CD8-positive, alpha-beta T cell (primary cell): ENCODE measurements at regions of chr16 and their contacts with region 1.

Region 1: GRCh38 chr16:27367461-27368357 is 34.3 kb upstream of the IL21R start:
- DNase-seq: peak; percentile 70 to 98 (median 84)
- ATAC-seq: peak; percentile 81
- H3K4me3 ChIP-seq: peak overlapping the region; percentile 1 to 11
- H3K4me3 Mint-ChIP-seq: peak overlapping the region; percentile 26
- H3K27ac ChIP-seq: peak overlapping the region; percentile 93 to 97
- H3K27ac Mint-ChIP-seq: peak overlapping the region; percentile 99
- H3K4me1 ChIP-seq: peaks cover 58% of the 10 kb centered on the region
- H3K4me1 Mint-ChIP-seq: peaks cover 69% of the 10 kb centered on the region
- H3K27me3 ChIP-seq: no peaks in the 10 kb centered on the region
- H3K27me3 Mint-ChIP-seq: no peaks in the 10 kb centered on the region
- CTCF ChIP-seq: peak; percentile 73

Region 2: DNA sequence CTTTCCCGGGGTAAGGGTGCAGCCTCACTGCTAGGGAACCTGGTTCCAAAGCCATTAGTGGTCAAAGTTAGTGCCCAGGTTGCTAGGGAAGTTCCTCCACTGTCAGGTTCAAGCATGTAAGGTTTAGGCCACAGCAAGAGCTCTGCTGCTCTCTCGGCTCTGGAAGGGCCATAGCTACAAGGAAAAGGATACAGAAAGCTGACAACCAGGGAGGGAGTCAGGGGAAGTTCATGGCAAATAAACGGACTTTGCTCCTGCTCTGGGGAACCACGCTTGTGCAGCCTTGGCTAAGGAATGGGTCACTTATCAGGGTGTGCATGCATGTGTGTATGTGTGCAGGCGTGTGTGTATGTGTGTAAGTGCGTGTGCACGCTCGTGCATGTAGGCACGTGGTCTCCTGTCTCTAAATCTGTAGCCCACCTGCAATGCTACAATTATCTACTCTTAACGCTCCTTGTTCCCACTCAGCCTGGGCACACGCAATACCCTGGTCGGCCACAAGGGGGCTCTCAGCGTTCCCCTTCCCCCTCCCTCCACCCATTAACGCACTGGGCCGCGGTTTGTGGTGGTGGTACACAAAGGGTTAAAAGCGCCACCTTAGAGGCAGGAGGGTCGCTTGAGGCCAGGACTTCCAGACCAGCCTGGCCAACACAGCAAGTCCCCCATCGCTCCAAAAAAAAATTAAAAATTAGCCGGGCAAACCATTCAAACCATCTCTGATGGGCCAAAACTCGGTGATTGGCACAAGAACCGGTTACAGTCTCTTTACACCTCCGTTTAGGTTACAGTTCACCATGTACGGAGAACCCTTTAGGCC is 212.8 kb before region 1 on chr16:
- CTCF ChIA-PET with region 1: interaction called, 10 read pairs
- POLR2A ChIA-PET with region 1: no interaction called
- intact Hi-C with region 1: loop called (anchors 1 kb)
- DNase-seq: peak; percentile 39 to 83 (median 71)
- ATAC-seq: peak; percentile 94
- H3K4me3 ChIP-seq: no peak overlapping the region
- H3K4me3 Mint-ChIP-seq: no peak overlapping the region
- H3K27ac ChIP-seq: no peak overlapping the region
- H3K27ac Mint-ChIP-seq: no peak overlapping the region
- H3K4me1 ChIP-seq: peaks cover 9% of the 10 kb centered on the region
- H3K4me1 Mint-ChIP-seq: peaks cover 8% of the 10 kb centered on the region
- H3K27me3 ChIP-seq: no peaks in the 10 kb centered on the region
- H3K27me3 Mint-ChIP-seq: no peaks in the 10 kb centered on the region
- CTCF ChIP-seq: peak; percentile 99

Region 3: GRCh38 chr16:27203429-27204231 is 164.1 kb before region 1 on chr16 and contains the start of gene KDM8:
- CTCF ChIA-PET with region 1: interaction called, 22 read pairs
- POLR2A ChIA-PET with region 1: interaction called, 13 read pairs
- intact Hi-C with region 1: loop called in 1 of 2 experiments (anchors 1 kb)
- DNase-seq: peak; percentile 99 to 100 (median 100)
- ATAC-seq: peak; percentile 85
- H3K4me3 ChIP-seq: peak within 1 kb of the TSS; percentile 83 to 93
- H3K4me3 Mint-ChIP-seq: peak within 1 kb of the TSS; percentile 96
- H3K27ac ChIP-seq: peak within 1 kb of the TSS; percentile 83 to 97
- H3K27ac Mint-ChIP-seq: peak within 1 kb of the TSS; percentile 99
- H3K4me1 ChIP-seq: peaks cover 54% of the 10 kb centered on the region
- H3K4me1 Mint-ChIP-seq: peaks cover 61% of the 10 kb centered on the region
- H3K27me3 ChIP-seq: no peaks in the 10 kb centered on the region
- H3K27me3 Mint-ChIP-seq: no peaks in the 10 kb centered on the region
- CTCF ChIP-seq: no peak
- total RNA-seq, gene KDM8: 17.6 to 22.6 TPM

Region 4: DNA sequence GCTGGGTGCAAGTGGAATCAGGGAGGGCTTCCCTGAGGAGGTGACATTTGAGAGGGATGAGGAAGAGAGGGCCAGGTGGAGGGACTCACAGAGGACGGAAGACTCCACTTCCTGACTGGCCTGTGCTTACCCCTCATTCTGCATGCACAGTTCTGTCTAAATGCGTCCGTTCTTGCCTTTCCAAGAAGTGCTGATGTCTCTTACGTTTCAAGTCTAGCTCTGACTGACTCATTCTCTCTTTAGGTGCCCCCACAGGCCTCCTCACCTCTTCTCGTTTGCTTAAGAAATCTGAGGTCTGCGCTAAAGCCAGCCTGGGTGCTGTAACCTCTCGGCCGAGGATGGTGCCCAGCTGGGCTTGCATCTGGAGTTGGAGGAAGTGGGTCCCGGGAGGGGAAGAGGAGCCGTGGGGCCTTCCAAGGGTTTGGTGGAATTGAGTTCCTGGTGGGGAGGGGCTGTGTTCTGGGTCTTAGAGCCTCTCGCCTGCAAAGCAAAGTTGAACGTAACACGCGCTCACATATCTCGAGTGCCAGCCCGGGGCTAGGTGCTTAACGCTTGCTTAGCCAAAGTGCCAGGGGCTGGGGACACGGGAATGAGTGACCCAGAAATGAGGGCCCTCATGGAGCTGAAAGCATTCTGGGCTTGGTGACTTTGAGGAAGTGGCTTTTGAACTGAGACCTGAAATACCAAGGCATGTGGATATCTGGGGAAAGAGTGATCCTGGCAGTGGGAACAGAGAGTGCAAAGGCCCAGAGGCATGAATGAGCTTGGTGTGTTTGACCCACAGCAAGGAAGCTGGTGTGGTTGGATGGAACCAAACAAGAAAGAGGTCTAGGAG is 49.1 kb before region 1 on chr16:
- CTCF ChIA-PET with region 1: interaction called, 20 read pairs
- POLR2A ChIA-PET with region 1: interaction called, 5 read pairs
- intact Hi-C with region 1: loop called (anchors 2 kb)
- DNase-seq: peak; percentile 10 to 76 (median 61)
- ATAC-seq: peak; percentile 67
- H3K4me3 ChIP-seq: peak overlapping the region; percentile 12 to 25
- H3K4me3 Mint-ChIP-seq: peak overlapping the region; percentile 74
- H3K27ac ChIP-seq: peak overlapping the region; percentile 28 to 87
- H3K27ac Mint-ChIP-seq: peak overlapping the region; percentile 98
- H3K4me1 ChIP-seq: peaks cover 75% of the 10 kb centered on the region
- H3K4me1 Mint-ChIP-seq: peaks cover 73% of the 10 kb centered on the region
- H3K27me3 ChIP-seq: no peaks in the 10 kb centered on the region
- H3K27me3 Mint-ChIP-seq: no peaks in the 10 kb centered on the region
- CTCF ChIP-seq: no peak

Region 5: DNA sequence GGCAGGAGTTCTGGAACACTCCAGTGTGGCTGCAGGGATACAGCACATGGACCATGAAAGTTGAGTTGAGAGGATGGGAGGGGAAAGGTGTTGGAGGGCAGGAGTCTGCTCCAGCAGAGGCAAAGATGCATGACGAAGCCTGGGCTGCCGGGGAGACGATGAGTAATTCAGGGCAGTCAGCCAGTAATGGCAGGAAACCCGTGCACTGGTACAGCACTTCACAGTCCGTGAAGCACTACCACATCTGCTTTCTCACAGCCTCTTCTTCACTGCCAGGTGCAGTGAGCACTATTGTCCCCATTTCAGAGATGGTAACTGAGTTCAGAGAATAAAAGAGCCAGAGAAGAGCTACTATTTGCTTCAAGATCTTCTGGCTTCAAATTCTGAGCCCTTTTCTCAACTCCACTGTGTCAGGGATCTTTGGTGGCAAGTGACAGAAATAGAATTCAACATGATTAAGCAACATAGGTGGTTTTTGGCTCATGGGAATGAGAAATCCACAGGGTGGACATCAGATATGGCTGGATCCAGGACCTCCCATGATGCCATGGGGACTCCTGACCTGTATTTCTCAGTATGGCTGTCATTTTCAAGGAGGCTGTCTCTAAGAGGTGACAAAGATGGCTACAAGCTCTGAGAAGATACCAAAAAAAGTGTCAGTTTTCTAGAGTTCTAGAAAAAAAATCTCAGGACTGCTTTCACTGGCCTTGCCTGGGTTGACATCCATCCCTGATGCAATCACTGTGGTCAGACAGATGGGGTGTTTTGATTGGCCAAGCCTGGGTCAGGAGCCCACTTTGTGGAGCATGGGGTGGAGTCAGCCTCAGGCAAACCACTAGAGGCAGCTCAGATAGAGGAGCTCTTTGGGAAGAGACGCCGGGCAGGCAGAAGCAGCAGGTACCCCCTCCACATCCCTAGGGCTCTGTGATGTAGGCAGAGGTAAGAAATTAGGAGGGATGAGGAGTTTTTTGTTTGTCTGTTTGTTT is 59.0 kb after region 1 on chr16:
- CTCF ChIA-PET with region 1: interaction called, 5 read pairs
- POLR2A ChIA-PET with region 1: interaction called, 6 read pairs
- intact Hi-C with region 1: loop called in 1 of 2 experiments (anchors 1 kb)
- DNase-seq: peak in 8 of 9 experiments; percentile 67 to 89 (median 81)
- ATAC-seq: peak; percentile 87
- H3K4me3 ChIP-seq: no peak overlapping the region
- H3K4me3 Mint-ChIP-seq: no peak overlapping the region
- H3K27ac ChIP-seq: peak overlapping the region in 1 of 2 experiments; percentile 69
- H3K27ac Mint-ChIP-seq: peak overlapping the region; percentile 69
- H3K4me1 ChIP-seq: peaks cover 22% of the 10 kb centered on the region
- H3K4me1 Mint-ChIP-seq: peaks cover 57% of the 10 kb centered on the region
- H3K27me3 ChIP-seq: no peaks in the 10 kb centered on the region
- H3K27me3 Mint-ChIP-seq: no peaks in the 10 kb centered on the region
- CTCF ChIP-seq: no peak

Region 6: GRCh38 chr16:27461483-27462171 is 93.9 kb after region 1 on chr16:
- CTCF ChIA-PET with region 1: interaction called, 23 read pairs
- POLR2A ChIA-PET with region 1: interaction called, 26 read pairs
- intact Hi-C with region 1: loop called in 1 of 2 experiments (anchors 1 kb)
- DNase-seq: no peak
- ATAC-seq: no peak
- H3K4me3 ChIP-seq: no peak overlapping the region
- H3K4me3 Mint-ChIP-seq: peak overlapping the region; percentile 32
- H3K27ac ChIP-seq: no peak overlapping the region
- H3K27ac Mint-ChIP-seq: peak overlapping the region; percentile 69
- H3K4me1 ChIP-seq: peaks cover 76% of the 10 kb centered on the region
- H3K4me1 Mint-ChIP-seq: peaks cover 79% of the 10 kb centered on the region
- H3K27me3 ChIP-seq: no peaks in the 10 kb centered on the region
- H3K27me3 Mint-ChIP-seq: no peaks in the 10 kb centered on the region
- CTCF ChIP-seq: no peak

Region 7: DNA sequence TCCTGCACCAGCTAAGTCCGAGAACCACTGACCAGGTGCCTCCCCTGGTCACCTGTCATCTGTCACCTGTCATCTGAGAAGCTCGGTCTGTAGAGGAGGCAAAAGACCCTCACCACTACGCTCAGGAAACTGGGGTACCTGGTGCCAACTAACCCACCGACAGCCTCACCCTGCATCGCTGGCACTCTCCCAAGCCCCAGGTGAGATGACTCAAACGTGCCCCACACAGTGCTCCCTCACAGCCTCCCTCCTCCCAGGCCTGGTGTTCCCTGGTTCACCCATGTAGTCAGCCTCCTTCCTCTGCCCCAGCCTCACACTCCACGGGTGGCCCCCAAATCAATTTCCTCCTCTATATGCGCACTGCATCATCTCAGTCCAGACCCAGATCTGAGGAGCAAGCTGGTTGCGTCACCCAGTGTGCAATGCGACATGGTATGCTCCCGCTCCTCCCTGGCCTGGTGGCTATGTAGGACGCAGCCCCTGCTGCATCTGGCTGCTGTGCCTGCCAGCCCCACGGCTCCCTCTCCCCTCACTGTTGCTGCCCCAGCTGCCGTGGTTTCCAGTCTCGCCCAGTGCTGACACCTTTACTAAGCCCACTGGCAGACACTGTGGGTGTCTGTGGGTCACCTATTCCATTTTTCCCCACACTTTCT is 113.7 kb after region 1 on chr16:
- CTCF ChIA-PET with region 1: no interaction called
- POLR2A ChIA-PET with region 1: no interaction called
- intact Hi-C with region 1: no loop called
- DNase-seq: no peak
- ATAC-seq: no peak
- H3K4me3 ChIP-seq: no peak overlapping the region
- H3K4me3 Mint-ChIP-seq: no peak overlapping the region
- H3K27ac ChIP-seq: no peak overlapping the region
- H3K27ac Mint-ChIP-seq: no peak overlapping the region
- H3K4me1 ChIP-seq: no peaks in the 10 kb centered on the region
- H3K4me1 Mint-ChIP-seq: no peaks in the 10 kb centered on the region
- H3K27me3 ChIP-seq: no peaks in the 10 kb centered on the region
- H3K27me3 Mint-ChIP-seq: no peaks in the 10 kb centered on the region
- CTCF ChIP-seq: no peak